Activated naive CD4-positive, alpha-beta T cell treated with anti-CD3 and anti-CD28 coated beads for 36 hours (primary cell): ENCODE measurements at regions of chr1 and their contacts with region 1.

Region 1: DNA sequence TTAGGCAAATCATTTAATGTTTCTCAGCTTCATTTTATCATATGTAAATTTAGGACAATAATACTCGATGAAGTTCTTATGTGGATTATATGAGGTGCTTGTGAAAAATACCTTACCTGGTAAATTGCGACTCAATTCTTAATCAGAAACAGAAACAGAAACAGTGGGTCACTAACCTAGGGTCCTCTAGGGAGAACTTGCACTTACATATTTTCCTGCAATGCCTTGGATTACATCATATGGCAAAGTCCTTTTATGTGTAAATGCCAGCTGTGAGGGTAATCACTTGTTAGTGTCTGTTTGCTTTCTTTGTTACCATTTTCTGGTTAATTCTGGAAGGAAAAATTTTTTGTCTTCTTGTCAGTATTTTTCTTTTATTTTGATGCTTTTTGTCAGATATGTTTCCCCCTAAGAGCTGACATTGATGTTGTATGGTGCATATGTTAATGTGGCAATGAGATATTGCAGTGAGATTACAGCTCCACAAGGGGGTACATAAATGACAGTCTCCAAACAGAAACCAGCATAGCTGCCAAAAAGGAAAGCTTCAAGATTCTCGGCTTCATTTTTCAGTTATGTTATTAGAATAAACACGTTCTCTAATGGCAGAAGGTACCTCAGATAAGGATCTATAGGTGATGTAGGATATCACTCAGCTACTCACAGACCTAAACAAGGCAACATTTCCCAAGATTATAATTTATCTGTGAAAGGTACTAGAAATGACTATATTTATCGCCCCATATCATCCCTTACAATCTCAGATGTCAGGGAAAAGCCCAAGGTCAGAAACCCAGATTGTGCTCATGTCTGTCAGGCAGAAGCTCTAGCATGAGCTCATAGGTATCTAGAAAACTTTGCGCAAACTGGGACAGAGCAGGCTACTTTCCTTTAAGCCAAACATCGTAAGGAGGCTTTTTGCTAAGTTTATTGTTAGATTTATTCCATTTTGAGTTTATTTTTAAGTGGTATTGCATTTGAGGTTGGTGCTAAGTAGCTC is 119.9 kb downstream of the FASLG start:
- DNase-seq: no peak
- H3K4me3 Mint-ChIP-seq: no peak overlapping the region
- H3K27ac Mint-ChIP-seq: no peak overlapping the region
- H3K4me1 Mint-ChIP-seq: peaks cover 16% of the 10 kb centered on the region
- H3K27me3 Mint-ChIP-seq: no peaks in the 10 kb centered on the region

Region 2: DNA sequence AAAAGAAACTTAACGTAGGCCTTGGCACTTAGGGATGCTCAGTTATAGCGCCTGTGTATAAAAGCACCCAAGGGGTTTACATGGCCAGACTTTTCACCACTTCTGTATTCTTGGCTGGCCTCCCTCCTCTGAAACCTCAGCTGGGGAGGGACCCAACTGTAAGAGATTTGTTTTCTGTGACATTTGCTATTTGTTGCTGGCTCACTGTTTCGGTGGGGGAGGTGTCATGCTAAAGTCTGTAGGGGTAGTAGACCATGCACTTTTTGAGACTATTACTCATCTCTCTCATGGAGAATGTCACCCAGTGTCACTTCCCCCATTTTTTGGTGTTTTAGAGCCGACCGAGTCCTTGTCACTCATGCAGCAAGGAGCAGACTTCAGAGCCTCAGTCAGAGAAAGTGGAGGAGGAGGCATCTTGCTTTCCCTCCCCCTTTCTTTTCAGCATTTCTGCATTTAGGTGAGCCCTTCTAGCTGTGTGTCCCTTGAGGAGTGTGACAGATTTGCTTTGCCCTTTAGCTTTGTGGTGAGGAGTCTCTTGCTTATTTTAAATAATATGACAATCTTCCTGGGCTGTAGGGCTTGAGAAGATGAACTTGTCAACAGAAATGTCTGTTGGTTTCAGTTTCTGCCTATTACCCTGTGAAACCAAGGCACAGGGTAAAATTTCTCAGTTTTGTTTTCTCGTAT is 40.2 kb after region 1 on chr1:
- CTCF ChIA-PET with region 1: interaction called, 15 read pairs
- intact Hi-C with region 1: loop called (anchors 1 kb)
- DNase-seq: peak; percentile 68
- H3K4me3 Mint-ChIP-seq: no peak overlapping the region
- H3K27ac Mint-ChIP-seq: no peak overlapping the region
- H3K4me1 Mint-ChIP-seq: peaks cover 25% of the 10 kb centered on the region
- H3K27me3 Mint-ChIP-seq: no peaks in the 10 kb centered on the region

Region 3: GRCh38 chr1:172966844-172967540 is 188.2 kb after region 1 on chr1:
- CTCF ChIA-PET with region 1: no interaction called
- intact Hi-C with region 1: loop called (anchors 2 kb)
- DNase-seq: no peak
- H3K4me3 Mint-ChIP-seq: no peak overlapping the region
- H3K27ac Mint-ChIP-seq: no peak overlapping the region
- H3K4me1 Mint-ChIP-seq: peaks cover 18% of the 10 kb centered on the region
- H3K27me3 Mint-ChIP-seq: peaks cover 2% of the 10 kb centered on the region